Activated B cell treated with CpG ODN at 0.5 μM for 24 hours (primary cell): ENCODE measurements at regions of chr5 and their contacts with region 1.

Region 1: DNA sequence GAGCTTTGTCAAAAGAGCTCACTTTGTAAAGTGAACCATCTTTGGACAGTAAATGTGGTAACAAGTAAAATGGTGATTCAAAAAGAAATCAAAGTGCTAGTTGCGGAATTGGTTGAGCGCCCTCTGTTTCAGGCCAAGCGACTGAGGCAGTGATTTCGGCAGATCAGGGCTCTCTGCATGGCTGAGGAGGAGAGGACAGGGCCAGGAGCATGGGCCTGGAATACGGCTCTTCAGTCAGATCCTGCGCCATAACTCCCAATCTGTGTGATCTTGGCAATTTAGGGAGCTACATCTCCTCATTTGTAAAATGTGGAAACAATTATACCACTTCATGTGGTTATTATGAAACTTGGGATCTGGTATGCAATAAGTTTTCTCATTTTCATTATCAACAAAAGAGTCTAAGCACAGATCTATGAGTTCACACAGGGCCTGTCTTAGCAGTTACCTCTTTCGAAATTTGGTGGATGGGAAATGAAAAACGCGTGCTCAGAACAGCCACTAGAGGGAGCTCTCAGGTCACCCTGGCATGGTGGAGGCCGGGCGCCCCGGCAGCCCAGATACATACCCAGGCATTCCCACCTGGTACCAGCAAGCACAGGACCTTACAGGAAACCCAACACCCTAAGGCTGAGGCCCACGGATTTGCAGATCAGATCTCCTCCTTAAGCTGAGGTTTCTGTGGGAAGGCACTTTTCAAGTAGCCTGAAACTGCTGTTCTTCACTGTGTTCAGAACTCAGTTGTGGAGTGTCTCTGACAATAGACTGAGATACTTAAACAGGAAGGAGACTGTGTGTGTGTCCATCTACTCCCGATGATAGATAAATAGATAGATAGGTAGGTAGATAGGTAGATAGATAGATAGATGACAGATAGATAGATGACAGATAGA is 303.7 kb downstream of the RAB3C start:
- DNase-seq: peak; percentile 22
- ATAC-seq: peak; percentile 77
- H3K4me3 Mint-ChIP-seq: no peak overlapping the region
- H3K27ac Mint-ChIP-seq: no peak overlapping the region
- H3K4me1 Mint-ChIP-seq: peaks cover 7% of the 10 kb centered on the region
- H3K27me3 Mint-ChIP-seq: peaks cover 18% of the 10 kb centered on the region
- CTCF ChIP-seq: peak; percentile 98

Region 2: GRCh38 chr5:58902765-58903164 is 16.2 kb after region 1 on chr5:
- CTCF ChIA-PET with region 1: interaction called, 11 read pairs
- POLR2A ChIA-PET with region 1: no interaction called
- intact Hi-C with region 1: no loop called
- DNase-seq: no peak
- ATAC-seq: no peak
- H3K4me3 Mint-ChIP-seq: no peak overlapping the region
- H3K27ac Mint-ChIP-seq: no peak overlapping the region
- H3K4me1 Mint-ChIP-seq: no peaks in the 10 kb centered on the region
- H3K27me3 Mint-ChIP-seq: peaks cover 4% of the 10 kb centered on the region
- CTCF ChIP-seq: no peak

Region 3: GRCh38 chr5:59007460-59008063 is 121.0 kb after region 1 on chr5:
- CTCF ChIA-PET with region 1: interaction called, 12 read pairs
- POLR2A ChIA-PET with region 1: no interaction called
- intact Hi-C with region 1: loop called (anchors 1 kb)
- DNase-seq: no peak
- ATAC-seq: no peak
- H3K4me3 Mint-ChIP-seq: no peak overlapping the region
- H3K27ac Mint-ChIP-seq: no peak overlapping the region
- H3K4me1 Mint-ChIP-seq: no peaks in the 10 kb centered on the region
- H3K27me3 Mint-ChIP-seq: no peaks in the 10 kb centered on the region
- CTCF ChIP-seq: no peak

Region 4: GRCh38 chr5:59115345-59115744 is 228.8 kb after region 1 on chr5:
- CTCF ChIA-PET with region 1: no interaction called
- POLR2A ChIA-PET with region 1: no interaction called
- intact Hi-C with region 1: no loop called
- DNase-seq: no peak
- ATAC-seq: no peak
- H3K4me3 Mint-ChIP-seq: no peak overlapping the region
- H3K27ac Mint-ChIP-seq: no peak overlapping the region
- H3K4me1 Mint-ChIP-seq: no peaks in the 10 kb centered on the region
- H3K27me3 Mint-ChIP-seq: no peaks in the 10 kb centered on the region
- CTCF ChIP-seq: no peak

Region 5: GRCh38 chr5:59174248-59174844 is 287.8 kb after region 1 on chr5:
- CTCF ChIA-PET with region 1: interaction called, 50 read pairs
- POLR2A ChIA-PET with region 1: no interaction called
- intact Hi-C with region 1: loop called (anchors 1 kb)
- DNase-seq: no peak
- ATAC-seq: peak; percentile 50
- H3K4me3 Mint-ChIP-seq: no peak overlapping the region
- H3K27ac Mint-ChIP-seq: no peak overlapping the region
- H3K4me1 Mint-ChIP-seq: peaks cover 6% of the 10 kb centered on the region
- H3K27me3 Mint-ChIP-seq: no peaks in the 10 kb centered on the region
- CTCF ChIP-seq: no peak

Region 6: GRCh38 chr5:59367791-59368394 is 481.3 kb after region 1 on chr5:
- CTCF ChIA-PET with region 1: interaction called, 3 read pairs
- POLR2A ChIA-PET with region 1: no interaction called
- intact Hi-C with region 1: loop called (anchors 5 kb)
- DNase-seq: no peak
- ATAC-seq: no peak
- H3K4me3 Mint-ChIP-seq: no peak overlapping the region
- H3K27ac Mint-ChIP-seq: no peak overlapping the region
- H3K4me1 Mint-ChIP-seq: no peaks in the 10 kb centered on the region
- H3K27me3 Mint-ChIP-seq: peaks cover 2% of the 10 kb centered on the region
- CTCF ChIP-seq: no peak

Region 7: DNA sequence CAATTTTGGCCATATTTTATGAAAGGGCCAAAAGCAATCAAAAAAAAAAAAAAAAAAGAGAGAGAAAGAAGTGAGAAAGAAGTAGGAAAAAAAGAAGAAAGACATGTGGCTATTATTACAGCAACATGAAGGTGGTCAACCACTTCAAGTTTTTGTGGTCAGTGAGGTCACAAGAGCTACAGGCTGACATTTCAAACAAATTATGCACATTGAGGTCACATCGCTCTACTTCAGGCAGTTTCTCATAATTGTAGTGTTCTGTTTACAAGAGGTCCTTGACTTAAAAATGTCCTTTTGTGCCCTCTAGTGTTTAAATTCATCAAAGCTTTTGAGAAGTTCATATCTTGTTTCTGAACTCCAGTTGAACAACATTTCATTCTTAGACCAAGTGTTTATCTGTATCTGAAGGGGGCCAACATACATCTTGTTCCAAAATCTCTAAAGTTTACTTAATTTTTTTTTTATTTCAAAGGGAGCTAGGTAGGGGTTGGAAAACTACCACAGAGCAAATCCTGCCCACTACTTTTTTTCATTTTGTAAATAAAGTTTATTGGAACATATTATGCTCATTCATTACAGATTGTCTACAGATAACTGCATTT is 493.9 kb after region 1 on chr5:
- CTCF ChIA-PET with region 1: interaction called, 12 read pairs
- POLR2A ChIA-PET with region 1: no interaction called
- intact Hi-C with region 1: loop called (anchors 2 kb)
- DNase-seq: no peak
- ATAC-seq: peak; percentile 52
- H3K4me3 Mint-ChIP-seq: no peak overlapping the region
- H3K27ac Mint-ChIP-seq: no peak overlapping the region
- H3K4me1 Mint-ChIP-seq: peaks cover 4% of the 10 kb centered on the region
- H3K27me3 Mint-ChIP-seq: no peaks in the 10 kb centered on the region
- CTCF ChIP-seq: no peak